ENCODE measurements at regions of chr11 and their contacts with region 1.

Region 1: DNA sequence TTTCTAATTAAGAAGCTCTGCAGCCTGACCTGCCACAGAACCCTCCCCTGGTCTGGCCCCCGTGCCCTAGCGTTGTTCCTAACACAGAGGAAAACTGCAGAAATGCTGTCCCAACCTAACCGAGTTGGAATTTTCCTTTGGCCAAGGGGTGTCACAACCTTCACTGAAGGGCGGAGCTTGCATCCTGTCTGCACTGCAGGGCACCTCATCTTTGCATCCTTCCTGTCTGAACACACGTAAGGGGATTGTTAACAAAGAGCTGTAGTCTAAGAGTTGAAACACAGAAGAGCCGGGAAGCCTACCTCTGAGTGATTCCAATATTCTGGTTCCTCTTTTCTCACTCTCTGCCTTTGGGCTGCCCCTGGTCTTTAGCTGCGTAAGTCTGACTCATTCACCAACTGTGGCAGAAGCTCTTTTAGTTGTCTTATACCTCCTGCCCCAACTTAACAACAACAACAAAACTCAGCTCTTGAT is 1.6 kb downstream of the DIXDC1 start:
- DNase-seq: peak; percentile 67
- H3K4me3 ChIP-seq: peak overlapping the region; percentile 70
- H3K27ac ChIP-seq: peak overlapping the region; percentile 39
- H3K4me1 ChIP-seq: peaks cover 42% of the 10 kb centered on the region
- CTCF ChIP-seq: no peak

Region 2: GRCh38 chr11:112174789-112175598 is 236.3 kb after region 1 on chr11 and contains the start of gene BCO2:
- CTCF ChIA-PET with region 1: no interaction called
- POLR2A ChIA-PET with region 1: interaction called, 4 read pairs
- intact Hi-C with region 1: loop called (anchors 5 kb)
- DNase-seq: peak; percentile 30
- H3K4me3 ChIP-seq: peak within 1 kb of the TSS; percentile 27
- H3K27ac ChIP-seq: no peak within 1 kb of the TSS
- H3K4me1 ChIP-seq: peaks cover 8% of the 10 kb centered on the region
- CTCF ChIP-seq: peak; percentile 87
- total RNA-seq, gene BCO2: 0.60 and 1.4 TPM in 2 replicates

Region 3: GRCh38 chr11:112289588-112290492 is 351.1 kb after region 1 on chr11:
- CTCF ChIA-PET with region 1: no interaction called
- POLR2A ChIA-PET with region 1: no interaction called
- intact Hi-C with region 1: no loop called
- DNase-seq: peak; percentile 64
- H3K4me3 ChIP-seq: peak overlapping the region; percentile 49
- H3K27ac ChIP-seq: no peak overlapping the region
- H3K4me1 ChIP-seq: peaks cover 5% of the 10 kb centered on the region
- CTCF ChIP-seq: peak; percentile 83

Measured in OCI-LY7 (cell line).